Natural killer cell (primary cell): ENCODE measurements at regions of chr12 and their contacts with region 1.

Region 1: GRCh38 chr12:54398995-54399793 is 14.7 kb upstream of the ZNF385A start:
- DNase-seq: peak; percentile 87 to 94
- ATAC-seq: peak; percentile 89 to 99 (median 95)
- H3K4me3 ChIP-seq: no peak overlapping the region
- H3K4me3 Mint-ChIP-seq: no peak overlapping the region
- H3K27ac ChIP-seq: no peak overlapping the region
- H3K27ac Mint-ChIP-seq: peak overlapping the region in 1 of 2 donors; percentile 13
- H3K4me1 ChIP-seq: peaks cover 10% of the 10 kb centered on the region
- H3K4me1 Mint-ChIP-seq: peaks cover 12 to 34% of the 10 kb centered on the region in 2 donors
- H3K27me3 ChIP-seq: no peaks in the 10 kb centered on the region
- H3K27me3 Mint-ChIP-seq: no peaks in the 10 kb centered on the region
- CTCF ChIP-seq: peak; percentile 94

Region 2: DNA sequence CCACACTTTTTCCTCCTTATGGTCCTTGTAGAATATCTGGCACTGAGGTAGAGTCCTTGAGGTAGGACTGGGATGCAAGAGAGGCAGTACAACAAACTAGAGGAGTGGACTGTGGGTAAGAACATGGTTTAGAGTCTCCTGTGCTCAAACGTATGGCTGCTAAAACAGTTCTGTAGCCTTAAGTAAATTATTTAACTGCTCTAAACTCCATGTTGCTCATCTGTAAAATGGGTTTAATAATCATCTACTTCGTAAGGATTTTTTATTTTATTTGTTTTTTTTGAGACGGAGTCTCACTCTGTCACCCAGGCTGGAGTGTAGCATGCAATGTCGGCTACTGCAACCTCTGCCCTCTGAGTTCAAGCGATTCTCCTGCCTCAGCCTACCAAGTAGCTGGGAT is 77.8 kb before region 1 on chr12:
- intact Hi-C with region 1: no loop called
- DNase-seq: no peak
- ATAC-seq: no peak
- H3K4me3 ChIP-seq: no peak overlapping the region
- H3K4me3 Mint-ChIP-seq: no peak overlapping the region
- H3K27ac ChIP-seq: no peak overlapping the region
- H3K27ac Mint-ChIP-seq: no peak overlapping the region
- H3K4me1 ChIP-seq: peaks cover 12% of the 10 kb centered on the region
- H3K4me1 Mint-ChIP-seq: peaks cover 11 to 20% of the 10 kb centered on the region in 2 donors
- H3K27me3 ChIP-seq: no peaks in the 10 kb centered on the region
- H3K27me3 Mint-ChIP-seq: no peaks in the 10 kb centered on the region
- CTCF ChIP-seq: no peak

Region 3: DNA sequence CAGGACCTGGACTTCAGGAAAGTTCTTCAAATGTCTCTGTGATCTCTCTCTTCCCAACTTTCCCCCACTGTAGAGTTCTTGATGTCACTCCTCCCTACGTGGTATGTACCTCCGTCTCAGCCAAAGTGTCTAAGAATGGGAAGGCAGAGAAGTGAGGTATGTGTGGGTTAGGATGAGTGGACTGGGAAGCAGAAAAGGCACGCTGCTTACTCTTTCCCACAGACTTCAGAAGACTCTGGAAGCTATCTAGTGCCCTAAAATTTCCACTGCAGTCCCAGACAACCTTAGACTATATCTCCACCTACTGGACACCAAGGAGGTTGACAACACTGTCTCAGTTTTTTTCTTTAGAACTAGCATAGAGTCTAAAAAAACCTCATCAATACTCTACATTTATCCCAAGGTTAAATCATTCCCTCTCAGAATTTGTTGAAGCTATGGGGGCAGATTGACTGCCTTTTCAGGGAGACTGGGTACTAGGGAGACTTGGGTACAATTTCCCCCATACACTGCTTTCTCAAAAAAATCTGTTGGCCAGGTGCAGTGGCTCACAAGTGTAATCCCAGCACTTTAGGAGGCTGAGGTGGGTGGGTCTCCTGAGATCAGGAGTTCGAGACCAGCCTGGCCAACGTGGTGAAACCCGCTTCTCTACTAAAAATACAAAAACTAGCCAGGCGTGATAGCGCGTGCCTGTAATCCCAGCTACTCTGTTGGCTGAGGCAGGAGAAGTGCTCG is 40.5 kb after region 1 on chr12:
- intact Hi-C with region 1: loop called (anchors 1 kb)
- DNase-seq: peak in 1 of 2 donors; percentile 78
- ATAC-seq: peak; percentile 85 to 92 (median 91)
- H3K4me3 ChIP-seq: no peak overlapping the region
- H3K4me3 Mint-ChIP-seq: no peak overlapping the region
- H3K27ac ChIP-seq: no peak overlapping the region
- H3K27ac Mint-ChIP-seq: peak overlapping the region; percentile 29 to 70
- H3K4me1 ChIP-seq: peaks cover 3% of the 10 kb centered on the region
- H3K4me1 Mint-ChIP-seq: peaks cover 30% of the 10 kb centered on the region in 2 donors
- H3K27me3 ChIP-seq: no peaks in the 10 kb centered on the region
- H3K27me3 Mint-ChIP-seq: no peaks in the 10 kb centered on the region
- CTCF ChIP-seq: peak; percentile 93

Region 4: DNA sequence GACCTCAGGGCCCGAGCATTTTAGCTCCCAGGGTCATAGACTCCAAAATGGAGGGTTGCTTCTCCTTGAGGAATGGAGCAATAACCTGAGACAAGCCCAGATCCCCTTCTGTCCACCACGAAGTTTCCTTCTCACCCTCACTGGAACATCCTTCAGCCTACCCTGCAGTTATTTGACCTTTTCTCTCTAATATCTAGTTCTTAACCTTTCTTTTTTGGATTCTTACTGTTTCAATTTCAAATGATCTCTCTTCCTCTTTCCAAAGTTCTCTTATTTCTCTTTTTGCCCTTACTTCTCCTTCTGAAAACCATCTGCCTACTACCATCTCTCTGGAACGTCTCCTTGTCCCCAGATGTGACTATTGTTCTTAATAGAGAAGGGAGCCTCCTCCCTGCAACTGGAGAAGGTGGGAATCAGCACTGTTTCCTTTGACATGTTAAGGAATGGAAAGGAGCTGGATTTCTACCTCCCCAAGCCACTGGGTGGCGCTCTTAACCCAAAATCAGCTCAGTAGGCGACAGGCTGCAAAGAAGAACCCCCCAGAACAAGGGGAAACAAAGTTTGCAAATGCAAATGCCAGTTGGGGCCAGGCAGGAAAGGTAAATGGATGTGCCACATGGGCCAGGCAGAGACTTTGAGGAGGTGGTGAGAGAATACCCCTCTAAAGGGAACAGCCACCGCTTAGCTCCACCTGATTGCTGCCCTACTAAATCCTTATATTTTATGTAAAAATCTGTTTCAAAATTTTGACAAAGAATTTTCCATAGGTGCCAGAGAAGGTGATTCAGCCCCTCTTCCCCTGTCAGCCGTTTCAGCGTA is 127.8 kb after region 1 on chr12:
- intact Hi-C with region 1: no loop called
- DNase-seq: peak; percentile 17 to 58
- ATAC-seq: no peak
- H3K4me3 ChIP-seq: no peak overlapping the region
- H3K4me3 Mint-ChIP-seq: no peak overlapping the region
- H3K27ac ChIP-seq: no peak overlapping the region
- H3K27ac Mint-ChIP-seq: peak overlapping the region in 1 of 2 donors; percentile 58
- H3K4me1 ChIP-seq: no peaks in the 10 kb centered on the region
- H3K4me1 Mint-ChIP-seq: peaks cover 0 to 23% of the 10 kb centered on the region in 2 donors
- H3K27me3 ChIP-seq: no peaks in the 10 kb centered on the region
- H3K27me3 Mint-ChIP-seq: no peaks in the 10 kb centered on the region
- CTCF ChIP-seq: peak; percentile 56